ENCODE measurements at regions of chr17 and their contacts with region 1.

Region 1: GRCh38 chr17:45021607-45022287 is 29.7 kb downstream of the DCAKD start:
- DNase-seq: peak; percentile 84 to 90 (median 89)
- ATAC-seq: peak; percentile 87
- H3K4me3 ChIP-seq: peak overlapping the region; percentile 18; the same call in 1 of the 2 replicates
- H3K27ac ChIP-seq: peak overlapping the region; percentile 55; the same call in 2 of the 3 replicates
- H3K4me1 ChIP-seq: peaks cover 24 to 39% of the 10 kb centered on the region in 2 experiments; a peak in 4 of 5 replicates
- H3K27me3 ChIP-seq: no peaks in the 10 kb centered on the region
- CTCF ChIP-seq: peak; percentile 78 to 92 (median 82)
- EP300 ChIP-seq: no peak
- POLR2A ChIP-seq: no peak
- RAD21 ChIP-seq: peak; percentile 76 to 77

Region 2: GRCh38 chr17:44919885-44920564 is 101.7 kb before region 1 on chr17:
- CTCF ChIA-PET with region 1: interaction called, 34 read pairs
- POLR2A ChIA-PET with region 1: interaction called, 3 read pairs
- in situ Hi-C with region 1: loop called (anchors 5 kb)
- intact Hi-C with region 1: loop called (anchors 2 kb)
- DNase-seq: peak; percentile 78 to 86 (median 81)
- ATAC-seq: peak; percentile 96
- H3K4me3 ChIP-seq: no peak overlapping the region
- H3K27ac ChIP-seq: no peak overlapping the region
- H3K4me1 ChIP-seq: peaks cover 2 to 12% of the 10 kb centered on the region in 2 experiments; a peak in 4 of 5 replicates
- H3K27me3 ChIP-seq: peaks cover 2 to 13% of the 10 kb centered on the region in 2 experiments; a peak in 2 of 5 replicates
- CTCF ChIP-seq: peak; percentile 93 to 95 (median 93)
- EP300 ChIP-seq: no peak
- POLR2A ChIP-seq: no peak
- RAD21 ChIP-seq: peak; percentile 84 to 92

Region 3: DNA sequence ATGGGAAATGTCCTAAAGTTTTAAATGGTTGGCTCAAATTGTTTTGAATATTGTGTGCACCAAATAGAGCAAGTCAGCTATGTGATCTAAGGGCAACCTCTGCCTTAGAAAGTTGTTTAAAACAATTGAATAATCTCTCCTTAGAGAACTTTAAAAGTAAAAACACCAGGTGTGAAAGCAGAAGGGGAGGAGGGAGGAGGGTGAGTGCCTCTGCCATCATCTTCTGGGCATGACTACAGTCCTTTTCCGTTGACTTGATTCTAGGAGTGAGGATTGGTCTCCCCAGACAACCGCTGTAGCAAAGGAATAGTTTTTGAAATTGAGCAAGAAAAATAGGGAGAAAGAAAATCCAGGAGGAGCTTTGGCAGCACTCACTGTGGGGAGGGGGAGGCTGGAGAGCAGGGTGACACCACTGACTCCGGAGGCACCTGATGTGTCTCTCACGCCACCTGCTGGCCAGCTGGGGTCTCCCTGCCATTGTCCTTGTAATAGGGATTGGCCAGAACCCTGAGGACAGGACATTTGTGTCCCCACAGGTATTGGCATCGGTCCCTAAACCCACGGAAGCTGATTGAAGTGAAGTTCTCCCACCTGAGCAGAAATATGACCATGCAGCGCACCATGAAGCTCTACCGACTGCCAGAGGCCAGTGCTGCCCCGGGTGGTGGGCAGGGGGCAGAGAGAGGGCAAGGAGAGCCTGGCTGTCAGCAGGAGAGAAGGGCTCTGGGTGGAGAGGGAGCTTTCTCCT is 77.3 kb after region 1 on chr17:
- CTCF ChIA-PET with region 1: interaction called, 5 read pairs
- POLR2A ChIA-PET with region 1: interaction called, 3 read pairs
- in situ Hi-C with region 1: no loop called
- intact Hi-C with region 1: loop called (anchors 5 kb)
- DNase-seq: peak; percentile 87 to 90 (median 88)
- ATAC-seq: peak; percentile 100
- H3K4me3 ChIP-seq: no peak overlapping the region
- H3K27ac ChIP-seq: no peak overlapping the region
- H3K4me1 ChIP-seq: no peaks in the 10 kb centered on the region
- H3K27me3 ChIP-seq: no peaks in the 10 kb centered on the region
- CTCF ChIP-seq: peak; percentile 85 to 94 (median 91)
- EP300 ChIP-seq: no peak
- POLR2A ChIP-seq: no peak
- RAD21 ChIP-seq: peak; percentile 60 to 81

Region 4: DNA sequence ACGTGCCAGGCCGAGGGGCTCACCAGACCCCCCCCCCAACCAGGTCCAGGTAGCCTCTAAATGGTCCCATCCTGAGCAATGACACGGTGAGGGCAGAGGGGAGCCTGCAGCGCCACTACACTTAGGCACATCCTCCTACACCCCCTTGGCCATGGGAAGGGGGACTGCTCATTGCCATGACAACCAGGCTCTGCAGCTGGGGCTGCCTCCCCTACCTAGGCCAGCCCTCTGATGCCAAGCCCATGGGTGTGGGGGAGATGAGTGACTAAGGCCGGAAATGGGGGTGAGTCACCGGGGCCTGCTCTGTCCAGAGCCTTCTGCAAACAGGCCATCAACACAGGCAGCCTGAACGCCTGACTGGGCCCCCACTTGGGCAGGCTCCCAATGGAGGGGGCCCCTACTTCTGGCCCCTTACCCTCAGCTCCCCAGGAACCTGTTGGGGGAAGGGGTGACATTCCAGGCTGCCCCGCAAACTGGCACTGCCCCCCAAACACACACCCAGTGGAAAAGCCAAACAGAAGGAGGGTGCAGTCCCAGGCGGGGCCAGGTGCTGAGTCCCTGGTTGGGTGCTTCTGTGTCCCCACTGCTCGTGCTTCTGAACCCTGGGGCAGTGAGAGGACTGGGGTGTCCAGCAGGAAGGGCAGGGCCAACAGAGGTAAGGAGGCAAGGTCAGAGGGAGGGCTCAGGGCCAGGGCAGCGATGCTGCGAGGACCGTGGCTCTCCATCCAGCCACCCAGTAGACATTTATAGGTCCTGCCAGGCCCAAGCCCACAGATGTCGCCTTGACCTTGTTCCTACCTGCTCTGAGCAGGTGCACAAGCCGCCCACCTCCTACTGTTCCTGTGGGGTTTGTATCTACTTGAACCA is 102.4 kb after region 1 on chr17:
- CTCF ChIA-PET with region 1: no interaction called
- POLR2A ChIA-PET with region 1: no interaction called
- in situ Hi-C with region 1: no loop called
- intact Hi-C with region 1: loop called (anchors 10 kb)
- DNase-seq: peak; percentile 77 to 89 (median 86)
- ATAC-seq: peak; percentile 95
- H3K4me3 ChIP-seq: no peak overlapping the region; the same call in 1 of the 2 replicates
- H3K27ac ChIP-seq: peak overlapping the region; percentile 92
- H3K4me1 ChIP-seq: peaks cover 35 to 55% of the 10 kb centered on the region in 2 experiments
- H3K27me3 ChIP-seq: no peaks in the 10 kb centered on the region
- CTCF ChIP-seq: no peak
- EP300 ChIP-seq: peak; percentile 73; the same call in 1 of the 2 replicates
- POLR2A ChIP-seq: peak; percentile 70
- RAD21 ChIP-seq: no peak